Naive thymus-derived CD4-positive, alpha-beta T cell (primary cell): ENCODE measurements at regions of chr9 and their contacts with region 1.

Region 1: DNA sequence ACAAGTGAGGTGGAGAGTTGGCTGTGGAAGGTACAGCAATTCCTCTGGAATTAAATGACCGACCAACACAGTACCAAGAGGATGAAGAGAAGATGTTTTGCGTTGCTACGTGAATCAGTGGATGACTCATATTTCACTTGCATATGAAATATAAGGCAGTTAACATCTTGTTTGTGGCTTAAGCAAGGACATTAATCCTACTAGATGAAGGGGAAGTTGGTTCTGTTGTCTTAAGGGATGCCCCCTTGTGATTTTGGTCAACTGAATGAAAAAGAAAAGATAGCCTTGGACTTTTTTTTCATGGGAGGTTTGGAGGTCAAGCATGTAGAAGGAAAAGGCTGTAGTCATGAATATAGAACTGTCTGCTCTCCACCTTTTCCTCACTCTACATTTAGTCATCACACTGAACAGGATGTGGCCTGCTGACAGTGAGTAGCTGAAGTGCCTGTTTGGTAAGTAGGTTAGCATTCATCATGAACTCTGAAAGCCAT is 33.9 kb downstream of the VLDLR start:
- DNase-seq: peak in 1 of 9 donors; percentile 35
- ATAC-seq: peak; percentile 80
- H3K4me3 ChIP-seq: no peak overlapping the region
- H3K4me3 Mint-ChIP-seq: peak overlapping the region in 1 of 10 donors; percentile 35
- H3K27ac ChIP-seq: no peak overlapping the region
- H3K27ac Mint-ChIP-seq: peak overlapping the region in 2 of 9 donors; percentile 67 to 91
- H3K4me1 ChIP-seq: no peaks in the 10 kb centered on the region
- H3K4me1 Mint-ChIP-seq: peaks cover 0 to 24% (median 0%) of the 10 kb centered on the region in 7 donors
- H3K27me3 ChIP-seq: no peaks in the 10 kb centered on the region
- H3K27me3 Mint-ChIP-seq: no peaks in the 10 kb centered on the region

Region 2: DNA sequence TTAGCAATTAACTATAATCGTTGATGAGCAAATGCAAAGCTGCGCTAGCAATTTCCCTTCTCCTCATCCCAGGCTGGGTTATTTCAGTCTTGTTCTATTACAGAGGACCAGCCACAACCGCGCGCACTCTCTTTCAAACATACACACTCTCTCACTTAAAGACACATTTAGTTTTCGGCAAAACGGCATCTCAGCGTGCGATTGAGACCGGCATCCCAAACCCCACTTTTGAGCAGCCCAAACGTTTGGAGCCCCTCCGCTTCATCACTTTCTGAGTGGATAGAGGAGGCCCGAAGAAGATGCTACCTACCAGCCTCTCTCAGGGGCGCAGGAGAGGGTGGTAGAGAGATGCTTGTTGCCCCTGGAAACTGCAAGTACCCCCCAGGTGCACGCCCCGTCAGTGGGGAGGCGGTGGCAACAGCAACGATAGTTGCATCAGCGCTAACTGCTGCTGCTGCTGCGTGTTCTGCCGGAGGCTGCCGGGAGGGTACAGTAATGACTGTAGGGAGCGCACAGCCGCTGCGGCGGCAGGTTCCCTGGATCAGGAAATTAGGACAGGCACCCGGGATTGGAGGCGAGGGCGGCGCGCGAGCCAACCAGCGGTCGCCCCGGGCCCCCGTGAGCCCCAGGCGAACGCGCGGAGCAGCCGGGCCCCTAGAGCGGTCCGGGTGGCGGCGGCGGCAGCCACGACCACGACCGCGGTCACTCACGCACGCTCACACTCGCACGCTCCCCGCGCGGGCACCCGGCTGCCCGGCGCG is 34.4 kb before region 1 on chr9:
- CTCF ChIA-PET with region 1: no interaction called
- POLR2A ChIA-PET with region 1: no interaction called
- intact Hi-C with region 1: loop called in 1 of 2 experiments (anchors 1 kb)
- DNase-seq: peak in 2 of 9 donors; percentile 7 to 65
- ATAC-seq: peak; percentile 54
- H3K4me3 ChIP-seq: no peak overlapping the region
- H3K4me3 Mint-ChIP-seq: peak overlapping the region; percentile 57 to 89 (median 77)
- H3K27ac ChIP-seq: no peak overlapping the region
- H3K27ac Mint-ChIP-seq: peak overlapping the region in 1 of 9 donors; percentile 82
- H3K4me1 ChIP-seq: peaks cover 0 to 7% of the 10 kb centered on the region in 2 donors
- H3K4me1 Mint-ChIP-seq: peaks cover 12 to 30% (median 21%) of the 10 kb centered on the region in 7 donors
- H3K27me3 ChIP-seq: peaks cover 0 to 9% of the 10 kb centered on the region in 2 donors
- H3K27me3 Mint-ChIP-seq: peaks cover 50 to 73% (median 65%) of the 10 kb centered on the region in 5 donors